Heart left ventricle (tissue), 16 donors: ENCODE measurements at regions of chr2 and their contacts with region 1.

Region 1: DNA sequence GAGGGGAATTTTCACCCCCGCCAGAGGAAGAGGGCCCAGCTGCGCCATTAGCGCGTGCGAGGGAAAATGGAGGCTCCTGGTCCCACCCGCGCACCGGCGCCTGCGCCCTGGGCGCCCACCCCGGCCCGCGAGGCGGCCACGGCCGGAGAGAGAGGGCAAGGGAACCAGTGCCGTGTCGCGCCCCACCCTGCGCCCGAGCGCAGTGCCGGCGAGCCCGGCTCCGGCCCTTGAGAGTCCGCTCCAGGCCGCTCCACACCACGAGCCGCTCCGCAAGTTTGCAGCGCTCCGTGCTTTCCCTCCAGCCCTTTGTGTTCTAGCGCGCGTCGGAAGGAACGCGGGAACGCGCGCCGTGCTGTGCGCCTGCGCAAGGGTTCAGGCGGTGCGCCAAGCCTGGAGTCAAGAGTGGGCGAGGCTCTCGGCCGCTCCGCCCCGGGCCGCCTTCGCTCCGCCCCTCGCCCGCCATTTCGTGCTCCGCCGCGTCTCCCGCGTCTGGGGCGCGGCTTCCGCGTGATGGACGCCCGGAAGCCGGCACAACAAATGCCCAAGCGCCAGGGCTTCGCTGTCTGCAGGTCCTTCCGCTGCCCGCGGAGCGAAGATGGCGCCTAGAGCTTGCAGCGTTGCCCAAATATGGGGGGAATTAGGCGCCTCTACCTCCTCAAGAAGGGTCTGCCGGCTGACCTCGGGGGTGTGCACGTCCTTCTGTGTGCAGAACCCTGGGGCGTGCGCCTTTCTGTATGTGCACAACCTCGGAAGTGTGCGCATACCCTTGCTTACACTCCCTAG is 46.1 kb upstream of the PTMA start:
- DNase-seq: peak; percentile 95 to 99 (median 97)
- ATAC-seq: peak; percentile 56 to 80 (median 72)
- H3K4me3 ChIP-seq: peak overlapping the region in 11 of 12 donors; percentile 19 to 65 (median 49)
- H3K27ac ChIP-seq: peak overlapping the region; percentile 93 to 100 (median 96)
- H3K4me1 ChIP-seq: peaks cover 0 to 41% (median 27%) of the 10 kb centered on the region in 12 donors
- H3K27me3 ChIP-seq: no peaks in the 10 kb centered on the region
- CTCF ChIP-seq: peak in 1 of 12 donors; percentile 5
- POLR2A ChIP-seq: peak; percentile 58 to 71

Region 2: GRCh38 chr2:230842473-230842872 is 819.7 kb before region 1 on chr2:
- intact Hi-C with region 1: no loop called
- DNase-seq: no peak
- ATAC-seq: no peak
- H3K4me3 ChIP-seq: no peak overlapping the region
- H3K27ac ChIP-seq: no peak overlapping the region
- H3K4me1 ChIP-seq: peaks cover 0 to under 1% (median 0%) of the 10 kb centered on the region in 12 donors
- H3K27me3 ChIP-seq: peaks cover 0 to 25% (median 0%) of the 10 kb centered on the region in 9 donors
- CTCF ChIP-seq: no peak
- POLR2A ChIP-seq: no peak

Region 3: DNA sequence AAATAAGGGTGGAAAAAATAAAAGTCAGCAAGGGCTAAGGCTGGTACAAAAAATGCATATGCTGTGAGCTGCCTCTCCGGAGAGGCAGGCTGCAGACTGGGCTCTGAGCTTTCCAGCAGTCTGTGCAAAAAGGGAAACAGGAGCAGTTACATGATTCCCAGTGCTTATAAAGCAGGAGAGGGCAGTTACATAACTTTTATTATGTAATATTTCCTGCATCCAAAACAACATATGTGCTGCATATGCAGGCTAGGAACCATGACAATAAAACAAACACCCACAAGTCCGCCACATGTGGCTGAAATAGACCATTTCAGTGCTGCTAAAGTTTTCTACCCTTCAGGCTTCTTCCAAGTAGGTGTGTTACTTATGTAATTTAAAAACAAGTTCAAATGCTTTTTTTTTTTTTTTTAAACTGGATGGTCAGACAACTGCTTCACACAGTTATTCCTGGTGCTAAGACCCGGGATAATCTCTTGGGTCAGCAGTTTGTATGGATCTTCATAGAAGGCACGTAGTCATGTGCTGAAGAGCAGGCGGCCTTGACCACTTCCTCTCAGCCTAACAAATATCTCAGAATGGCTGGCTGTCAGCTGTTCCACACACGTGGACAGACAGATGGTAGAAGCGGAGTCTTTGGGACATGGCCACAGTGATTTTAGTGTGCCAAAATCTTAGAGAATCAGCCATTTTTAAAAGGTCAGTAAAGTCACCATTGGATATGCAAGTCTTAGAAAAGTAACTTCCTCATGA is 420.3 kb before region 1 on chr2:
- intact Hi-C with region 1: no loop called
- DNase-seq: peak in 3 of 5 donors; percentile 34 to 65 (median 44)
- ATAC-seq: peak; percentile 52 to 82 (median 68)
- H3K4me3 ChIP-seq: no peak overlapping the region
- H3K27ac ChIP-seq: peak overlapping the region in 3 of 12 donors; percentile 40 to 84 (median 57)
- H3K4me1 ChIP-seq: peaks cover 0 to 7% (median 0%) of the 10 kb centered on the region in 12 donors
- H3K27me3 ChIP-seq: no peaks in the 10 kb centered on the region
- CTCF ChIP-seq: no peak
- POLR2A ChIP-seq: no peak

Region 4: DNA sequence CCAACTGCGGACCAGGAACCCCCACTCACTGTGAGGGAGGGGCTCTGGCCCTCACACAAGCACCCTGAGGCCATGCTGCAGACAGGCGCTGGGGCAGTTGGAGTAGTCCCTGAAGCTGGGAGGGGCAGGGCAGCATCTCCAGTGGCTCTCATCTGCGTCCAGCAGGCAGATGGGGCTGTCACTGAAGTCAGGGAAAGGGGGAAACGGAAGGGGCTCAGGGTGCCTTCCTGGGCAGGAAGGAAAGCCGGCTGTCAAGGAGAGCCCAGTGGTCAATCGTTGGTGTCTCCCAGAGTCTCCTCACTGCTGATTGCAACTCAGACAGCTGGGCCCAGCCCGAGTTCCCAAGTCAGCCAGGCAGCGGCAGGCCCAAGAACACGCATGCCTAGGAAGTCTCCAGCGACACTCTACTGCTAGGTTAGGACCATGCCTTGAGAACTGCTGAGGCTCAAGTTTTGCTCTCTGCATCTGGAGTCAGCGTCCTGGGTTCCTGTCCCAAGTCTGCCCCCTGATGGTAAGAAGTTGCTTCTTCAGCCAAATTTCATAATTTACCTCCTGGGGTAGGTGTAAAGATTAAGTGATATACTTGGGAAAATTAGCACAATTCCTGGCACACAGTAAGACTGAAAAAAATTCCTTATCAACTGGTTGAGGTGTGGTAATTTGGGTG is 104.5 kb before region 1 on chr2:
- intact Hi-C with region 1: no loop called
- DNase-seq: peak; percentile 75 to 84 (median 77)
- ATAC-seq: peak; percentile 87 to 95 (median 90)
- H3K4me3 ChIP-seq: no peak overlapping the region
- H3K27ac ChIP-seq: peak overlapping the region in 9 of 12 donors; percentile 29 to 73 (median 42)
- H3K4me1 ChIP-seq: peaks cover 0 to 27% (median 14%) of the 10 kb centered on the region in 12 donors
- H3K27me3 ChIP-seq: peaks cover 0 to 8% (median 0%) of the 10 kb centered on the region in 9 donors
- CTCF ChIP-seq: peak; percentile 65 to 87 (median 73)
- POLR2A ChIP-seq: no peak

Region 5: DNA sequence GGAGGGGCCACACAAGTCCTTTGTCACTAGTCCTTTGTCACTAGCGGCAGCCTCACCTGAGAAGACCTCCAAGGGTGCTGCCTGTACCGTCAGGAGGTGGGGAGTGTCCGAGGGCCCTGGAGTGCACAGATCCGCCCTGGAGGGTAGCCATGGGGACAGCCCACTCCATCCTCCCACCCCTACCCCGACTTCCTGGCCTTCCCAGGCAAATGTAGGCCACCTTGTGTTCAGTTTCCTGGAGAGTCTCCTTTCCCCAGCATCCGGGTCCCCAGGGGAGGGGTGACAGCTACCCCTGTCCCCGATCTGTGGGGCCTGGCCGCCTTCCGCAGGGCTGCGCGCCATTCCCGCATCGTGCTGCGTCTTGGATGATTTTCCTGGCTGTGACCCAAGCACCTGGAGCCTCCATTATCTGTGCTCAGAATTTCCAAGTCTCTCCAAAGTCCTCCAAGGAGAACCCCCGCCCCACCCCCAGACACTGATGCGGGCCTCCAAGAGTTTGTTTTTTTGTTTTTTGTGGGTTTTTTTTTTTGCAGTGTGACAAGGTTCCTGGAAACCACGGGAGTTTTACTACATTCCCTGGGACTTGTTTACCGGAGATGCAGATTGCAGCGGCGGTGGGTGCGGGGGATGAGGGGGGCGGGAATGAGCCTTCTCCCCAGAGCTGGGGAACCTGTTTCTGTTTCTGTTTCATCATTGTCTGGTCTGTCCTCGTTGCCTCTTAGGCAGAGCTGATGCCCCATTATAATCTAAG is 40.9 kb before region 1 on chr2:
- intact Hi-C with region 1: loop called in 1 of 10 experiments (anchors 2 kb)
- DNase-seq: peak; percentile 63 to 79 (median 73)
- ATAC-seq: peak; percentile 47 to 89 (median 53)
- H3K4me3 ChIP-seq: peak overlapping the region in 10 of 12 donors; percentile 18 to 43 (median 33)
- H3K27ac ChIP-seq: peak overlapping the region; percentile 6 to 82 (median 74)
- H3K4me1 ChIP-seq: peaks cover 0 to 29% (median 8%) of the 10 kb centered on the region in 12 donors
- H3K27me3 ChIP-seq: no peaks in the 10 kb centered on the region
- CTCF ChIP-seq: no peak
- POLR2A ChIP-seq: no peak

Region 6: GRCh38 chr2:231642631-231643494 is 19.4 kb before region 1 on chr2:
- intact Hi-C with region 1: loop called in 5 of 10 experiments (anchors 1 to 2 kb)
- DNase-seq: peak; percentile 89 to 94 (median 92)
- ATAC-seq: peak; percentile 92 to 97 (median 96)
- H3K4me3 ChIP-seq: peak overlapping the region in 9 of 12 donors; percentile 2 to 53 (median 39)
- H3K27ac ChIP-seq: peak overlapping the region; percentile 83 to 100 (median 94)
- H3K4me1 ChIP-seq: peaks cover 9 to 71% (median 48%) of the 10 kb centered on the region in 12 donors
- H3K27me3 ChIP-seq: no peaks in the 10 kb centered on the region
- CTCF ChIP-seq: peak in 3 of 12 donors; percentile 4 to 16 (median 10)
- POLR2A ChIP-seq: peak; percentile 5 to 71